HepG2 (cell line): ENCODE measurements at regions of chr2 and their contacts with region 1.

Region 1: DNA sequence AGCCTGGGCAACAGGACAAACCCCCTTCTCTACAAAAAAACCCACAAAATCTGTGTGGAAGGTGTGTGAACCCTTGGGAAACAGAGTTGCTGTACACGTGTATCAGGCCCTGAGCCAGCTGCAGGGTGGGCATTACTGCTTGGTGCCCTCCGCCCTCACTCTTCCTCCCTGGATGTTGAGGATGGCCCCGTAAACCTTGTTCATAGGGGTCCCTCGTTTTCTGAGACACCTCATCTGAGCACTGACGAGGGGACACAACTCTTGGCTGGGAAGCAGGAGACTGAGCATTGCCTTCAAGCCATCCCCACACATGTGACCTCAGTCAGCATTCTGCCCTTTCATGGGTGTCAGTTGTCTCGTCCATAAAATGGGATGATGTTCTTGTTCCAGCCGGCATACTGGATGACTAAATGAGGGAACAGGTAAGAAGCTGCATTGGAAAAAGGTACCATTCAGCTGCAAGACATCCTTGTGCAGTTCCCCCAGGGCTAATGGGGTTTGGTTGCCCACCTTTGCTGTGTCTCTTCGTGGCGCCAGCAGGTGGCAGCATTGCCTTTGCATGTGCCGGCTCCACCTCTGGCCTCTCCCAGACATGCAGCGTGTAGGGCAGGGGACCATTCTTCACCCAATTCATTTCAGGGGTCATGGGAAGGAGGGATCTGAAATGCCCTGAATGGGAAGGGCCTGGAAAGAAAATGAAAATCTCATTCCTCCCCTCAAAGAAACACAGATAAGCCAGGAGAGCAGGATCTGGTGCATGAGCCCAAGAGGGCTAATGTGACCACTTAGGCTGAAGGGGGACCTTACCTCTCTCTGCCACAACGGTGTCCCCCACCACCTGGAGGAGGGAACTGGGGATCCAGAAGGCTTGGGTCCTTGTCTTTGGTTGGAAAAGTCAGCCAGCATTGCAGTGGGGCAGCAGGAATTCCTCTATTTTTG is 36.4 kb upstream of the HAAO start:
- DNase-seq: peak; percentile 66
- ATAC-seq: peak; percentile 94
- H3K4me3 ChIP-seq: no peak overlapping the region
- H3K27ac ChIP-seq: no peak overlapping the region
- H3K4me1 ChIP-seq: peaks cover 31% of the 10 kb centered on the region
- H3K27me3 ChIP-seq: peaks cover 0 to 22% of the 10 kb centered on the region in 2 experiments; a peak in 3 of 5 replicates
- CTCF ChIP-seq: peak; percentile 99
- EP300 ChIP-seq: no peak
- POLR2A ChIP-seq: no peak
- RAD21 ChIP-seq: peak; percentile 95

Region 2: DNA sequence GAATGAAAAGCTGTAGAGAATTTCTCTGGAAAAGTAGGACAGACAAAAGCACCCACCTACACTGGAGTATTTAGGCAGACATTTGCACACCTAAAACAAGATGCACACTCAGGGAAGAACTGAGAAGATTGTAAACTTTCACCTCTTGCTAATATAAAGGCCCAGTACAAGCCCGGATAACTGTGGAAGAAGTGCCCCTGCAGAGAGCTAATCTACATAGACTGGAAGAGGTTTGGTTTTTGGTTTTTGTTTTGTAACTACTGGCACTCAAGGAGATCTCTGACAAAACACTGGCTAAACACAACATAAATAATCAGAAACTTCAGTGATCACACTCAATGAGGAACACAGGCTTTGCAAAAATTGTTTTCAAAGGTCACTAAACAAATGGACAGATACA is 1594.7 kb before region 1 on chr2:
- CTCF ChIA-PET with region 1: no interaction called
- POLR2A ChIA-PET with region 1: no interaction called
- in situ Hi-C with region 1: no loop called
- intact Hi-C with region 1: no loop called
- DNase-seq: no peak
- ATAC-seq: no peak
- H3K4me3 ChIP-seq: no peak overlapping the region
- H3K27ac ChIP-seq: no peak overlapping the region
- H3K4me1 ChIP-seq: no peaks in the 10 kb centered on the region
- H3K27me3 ChIP-seq: no peaks in the 10 kb centered on the region
- CTCF ChIP-seq: no peak
- EP300 ChIP-seq: no peak
- POLR2A ChIP-seq: no peak
- RAD21 ChIP-seq: no peak

Region 3: GRCh38 chr2:42777883-42778805 is 50.6 kb before region 1 on chr2:
- CTCF ChIA-PET with region 1: no interaction called
- POLR2A ChIA-PET with region 1: no interaction called
- in situ Hi-C with region 1: no loop called
- intact Hi-C with region 1: no loop called
- DNase-seq: no peak
- ATAC-seq: no peak
- H3K4me3 ChIP-seq: no peak overlapping the region
- H3K27ac ChIP-seq: no peak overlapping the region
- H3K4me1 ChIP-seq: peaks cover 6% of the 10 kb centered on the region; the same call in 1 of the 2 replicates
- H3K27me3 ChIP-seq: no peaks in the 10 kb centered on the region
- CTCF ChIP-seq: no peak
- EP300 ChIP-seq: no peak
- POLR2A ChIP-seq: no peak
- RAD21 ChIP-seq: no peak

Region 4: GRCh38 chr2:42810121-42810970 is 18.4 kb before region 1 on chr2:
- CTCF ChIA-PET with region 1: interaction called, 4 read pairs
- POLR2A ChIA-PET with region 1: interaction called, 15 read pairs
- in situ Hi-C with region 1: no loop called
- intact Hi-C with region 1: no loop called
- DNase-seq: peak; percentile 94
- ATAC-seq: peak; percentile 84
- H3K4me3 ChIP-seq: peak overlapping the region; percentile 79 to 93 (median 80)
- H3K27ac ChIP-seq: peak overlapping the region; percentile 98
- H3K4me1 ChIP-seq: peaks cover 19% of the 10 kb centered on the region
- H3K27me3 ChIP-seq: no peaks in the 10 kb centered on the region; a peak in 2 of 5 replicates
- CTCF ChIP-seq: 0 out of 2 replicates have a peak, but pooled peaks have one; percentile 31
- EP300 ChIP-seq: peak; percentile 34 to 36; a peak in 2 of 4 replicates
- POLR2A ChIP-seq: peak; percentile 82 to 95
- RAD21 ChIP-seq: peak; percentile 52; the same call in 1 of the 2 replicates

Region 5: DNA sequence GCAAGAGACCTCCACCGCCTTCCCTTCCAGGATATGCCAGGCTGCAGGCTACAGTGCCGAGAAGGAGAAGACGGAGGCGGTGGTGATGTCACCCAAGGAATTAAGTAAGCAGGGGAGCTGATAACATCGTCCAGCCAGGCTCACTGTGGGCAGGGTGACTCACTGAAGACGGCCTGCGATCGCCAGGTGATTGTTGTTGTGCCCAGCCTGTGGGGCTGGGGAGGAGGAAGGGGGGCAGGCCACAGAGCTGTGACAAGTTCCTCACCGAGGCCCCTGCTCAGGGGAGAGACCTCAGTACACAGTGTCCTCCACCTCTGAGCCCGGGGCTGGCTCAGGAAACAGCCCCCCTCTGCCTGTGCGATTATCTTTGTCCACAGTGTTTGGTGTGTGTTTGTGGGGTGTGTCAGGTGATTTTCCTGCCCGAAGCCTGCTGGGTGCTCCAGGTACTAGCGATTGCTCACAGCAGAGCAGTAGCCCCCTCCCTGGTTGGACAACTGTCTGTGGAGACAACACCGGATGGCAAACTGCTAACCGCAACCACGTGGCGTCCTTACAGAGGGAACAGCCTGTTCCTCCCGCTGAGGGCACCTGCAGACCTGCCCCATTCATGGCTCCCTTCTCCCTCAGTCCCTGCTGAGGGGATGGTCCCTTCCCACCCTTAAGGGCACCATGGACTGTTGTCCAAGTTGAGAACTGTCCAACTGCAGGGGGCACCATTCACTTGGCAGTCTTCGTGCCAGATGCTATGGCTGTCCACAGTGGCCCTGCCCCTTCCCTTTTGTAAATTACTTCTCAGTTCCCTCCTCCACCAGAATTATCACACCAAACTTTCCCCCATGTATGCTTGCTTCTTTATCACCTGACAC is 302.5 kb after region 1 on chr2:
- CTCF ChIA-PET with region 1: no interaction called
- POLR2A ChIA-PET with region 1: no interaction called
- in situ Hi-C with region 1: no loop called
- intact Hi-C with region 1: loop called (anchors 5 kb)
- DNase-seq: peak; percentile 80
- ATAC-seq: peak; percentile 68
- H3K4me3 ChIP-seq: peak overlapping the region in 1 of 3 experiments; percentile 34; a peak in 2 of 6 replicates
- H3K27ac ChIP-seq: peak overlapping the region; percentile 11
- H3K4me1 ChIP-seq: peaks cover 86% of the 10 kb centered on the region
- H3K27me3 ChIP-seq: no peaks in the 10 kb centered on the region
- CTCF ChIP-seq: peak; percentile 96
- EP300 ChIP-seq: peak in 1 of 2 experiments; percentile 15; a peak in 1 of 4 replicates
- POLR2A ChIP-seq: no peak
- RAD21 ChIP-seq: peak; percentile 97

Region 6: DNA sequence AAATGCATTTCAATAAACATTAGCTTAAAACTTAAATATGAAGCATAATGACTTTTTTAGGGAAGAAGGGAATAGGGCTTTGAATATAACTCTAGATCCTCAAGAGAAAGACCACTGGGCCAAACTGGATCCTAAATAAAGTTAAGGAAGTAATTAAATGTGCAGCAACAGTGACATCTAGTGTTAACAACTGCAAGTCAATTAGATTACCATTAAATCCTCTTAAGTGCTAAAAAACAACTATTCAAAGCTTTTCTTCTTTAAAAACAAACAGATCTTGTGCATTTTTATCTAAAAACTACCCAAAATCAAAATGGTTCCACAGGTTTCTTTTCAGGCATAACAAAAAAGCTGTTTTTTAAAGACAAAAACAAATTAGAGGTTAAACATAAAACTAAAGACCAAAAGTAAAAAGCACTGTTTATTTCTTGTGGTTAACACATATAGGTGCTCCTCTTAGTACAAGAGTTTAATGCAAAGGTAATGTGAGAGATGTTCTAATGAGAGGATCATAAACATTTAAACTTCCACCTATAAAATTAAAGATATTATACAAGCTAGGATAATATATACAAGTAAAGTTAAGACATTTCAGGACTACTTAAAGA is 655.7 kb after region 1 on chr2:
- CTCF ChIA-PET with region 1: no interaction called
- POLR2A ChIA-PET with region 1: no interaction called
- in situ Hi-C with region 1: no loop called
- intact Hi-C with region 1: loop called (anchors 1 kb)
- DNase-seq: peak; percentile 85
- ATAC-seq: no peak
- H3K4me3 ChIP-seq: no peak overlapping the region
- H3K27ac ChIP-seq: no peak overlapping the region
- H3K4me1 ChIP-seq: peaks cover 15% of the 10 kb centered on the region; the same call in 1 of the 2 replicates
- H3K27me3 ChIP-seq: no peaks in the 10 kb centered on the region
- CTCF ChIP-seq: peak; percentile 79
- EP300 ChIP-seq: no peak
- POLR2A ChIP-seq: no peak
- RAD21 ChIP-seq: peak; percentile 84

Region 7: GRCh38 chr2:43576981-43577892 is 748.5 kb after region 1 on chr2:
- CTCF ChIA-PET with region 1: interaction called, 29 read pairs
- POLR2A ChIA-PET with region 1: no interaction called
- in situ Hi-C with region 1: no loop called
- intact Hi-C with region 1: loop called (anchors 1 kb)
- DNase-seq: peak; percentile 63
- ATAC-seq: 0 out of 3 replicates have a peak, but pooled peaks have one; percentile 33
- H3K4me3 ChIP-seq: no peak overlapping the region
- H3K27ac ChIP-seq: no peak overlapping the region
- H3K4me1 ChIP-seq: no peaks in the 10 kb centered on the region
- H3K27me3 ChIP-seq: no peaks in the 10 kb centered on the region
- CTCF ChIP-seq: peak; percentile 68
- EP300 ChIP-seq: no peak
- POLR2A ChIP-seq: no peak
- RAD21 ChIP-seq: 0 out of 2 replicates have a peak, but pooled peaks have one; percentile 14